Aorta (tissue), 5 donors: ENCODE measurements at regions of chr3 and their contacts with region 1.

Region 1: GRCh38 chr3:170089862-170090600 is 52.2 kb downstream of the GPR160 start:
- DNase-seq: no peak
- ATAC-seq: no peak
- H3K4me3 ChIP-seq: no peak overlapping the region
- H3K27ac ChIP-seq: no peak overlapping the region
- H3K4me1 ChIP-seq: no peaks in the 10 kb centered on the region
- H3K27me3 ChIP-seq: no peaks in the 10 kb centered on the region

Region 2: DNA sequence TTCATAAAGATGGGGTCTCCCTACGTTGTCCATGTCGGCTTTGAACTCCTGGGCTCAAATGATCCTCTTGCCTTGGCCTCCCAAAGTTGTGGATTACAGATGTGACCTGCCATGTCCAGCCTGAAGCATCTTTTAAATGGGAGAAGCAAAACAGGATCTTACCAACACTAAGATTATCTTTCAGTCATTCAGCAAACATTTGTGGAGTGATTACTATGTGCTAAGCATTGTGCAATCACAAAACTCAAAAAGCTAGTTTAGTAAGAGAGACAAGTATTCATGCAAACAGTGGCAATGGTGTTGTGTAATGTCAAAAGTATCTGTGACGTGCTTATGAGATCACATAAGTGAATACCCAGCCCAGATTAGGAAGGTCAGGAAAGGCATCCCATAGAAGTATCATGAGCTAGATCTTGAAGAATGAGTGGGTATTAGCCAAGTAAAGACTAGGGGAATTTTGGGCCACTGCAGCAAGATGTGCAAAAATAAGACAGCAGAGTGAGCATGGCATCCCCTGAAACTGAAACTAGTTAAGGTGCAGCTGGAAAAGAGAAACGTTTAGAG is 91.4 kb before region 1 on chr3:
- intact Hi-C with region 1: loop called in 1 of 2 experiments (anchors 10 kb)
- DNase-seq: no peak
- ATAC-seq: no peak
- H3K4me3 ChIP-seq: no peak overlapping the region
- H3K27ac ChIP-seq: no peak overlapping the region
- H3K4me1 ChIP-seq: no peaks in the 10 kb centered on the region
- H3K27me3 ChIP-seq: no peaks in the 10 kb centered on the region

Region 3: GRCh38 chr3:170044795-170045244 is 45.2 kb before region 1 on chr3:
- intact Hi-C with region 1: no loop called
- DNase-seq: no peak
- ATAC-seq: no peak
- H3K4me3 ChIP-seq: no peak overlapping the region
- H3K27ac ChIP-seq: no peak overlapping the region
- H3K4me1 ChIP-seq: no peaks in the 10 kb centered on the region
- H3K27me3 ChIP-seq: no peaks in the 10 kb centered on the region

Region 4: DNA sequence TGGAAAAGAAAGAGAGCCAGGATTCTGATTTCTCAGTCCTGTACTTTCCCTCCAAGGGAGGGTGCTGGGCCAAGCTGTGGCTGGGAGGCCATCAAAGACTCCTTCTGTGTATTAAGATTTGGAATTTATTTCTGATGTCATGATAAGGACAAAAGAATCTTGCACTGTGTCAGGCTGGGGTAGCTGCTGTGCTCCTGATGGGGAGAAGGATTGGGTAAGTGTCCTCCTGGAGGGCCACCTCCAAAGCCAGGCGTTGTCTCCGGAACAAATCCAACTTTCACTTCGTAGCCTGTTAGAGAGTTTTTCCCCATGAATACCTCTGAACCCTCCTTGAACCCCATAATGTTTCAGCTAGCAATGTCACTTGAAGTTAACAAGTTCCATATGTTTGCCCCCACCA is 358.6 kb after region 1 on chr3:
- intact Hi-C with region 1: no loop called
- DNase-seq: no peak
- ATAC-seq: peak; percentile 38
- H3K4me3 ChIP-seq: no peak overlapping the region
- H3K27ac ChIP-seq: no peak overlapping the region
- H3K4me1 ChIP-seq: no peaks in the 10 kb centered on the region
- H3K27me3 ChIP-seq: no peaks in the 10 kb centered on the region